CD8-positive, alpha-beta T cell (primary cell): ENCODE measurements at regions of chr12 and their contacts with region 1.

Region 1: DNA sequence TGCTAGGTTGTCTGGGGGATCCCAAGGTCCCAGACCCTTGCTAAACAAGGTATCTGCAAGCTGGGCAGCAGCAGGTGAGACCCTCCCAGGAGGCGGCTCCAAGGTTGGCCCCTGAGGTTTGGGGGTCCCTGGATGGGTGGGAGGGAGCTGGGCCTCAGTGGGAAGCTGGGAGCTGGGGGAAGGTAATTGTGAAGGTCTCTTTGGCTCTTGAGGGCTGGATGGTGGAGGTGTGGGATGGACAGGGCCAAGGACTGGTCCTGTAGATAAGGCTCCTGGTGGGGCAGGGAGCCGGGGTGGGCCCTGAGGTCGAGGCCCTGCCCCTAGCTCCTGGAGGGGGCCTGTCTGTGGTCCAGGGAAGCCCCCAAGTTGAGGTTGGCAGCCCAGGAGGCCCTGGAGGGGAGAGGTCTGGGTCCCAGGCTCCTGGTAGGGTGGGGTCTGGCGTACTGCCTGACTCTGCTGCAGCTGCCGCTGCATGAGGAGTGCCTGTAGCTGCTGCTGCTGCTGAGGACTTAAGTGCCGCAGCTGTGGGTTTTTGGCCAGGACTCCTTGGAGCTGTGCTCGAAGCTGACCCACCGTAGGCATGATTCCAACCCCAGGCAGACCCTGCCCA is 13.1 kb upstream of the PRKAG1 start:
- DNase-seq: no peak
- ATAC-seq: no peak
- H3K4me3 ChIP-seq: no peak overlapping the region
- H3K4me3 Mint-ChIP-seq: no peak overlapping the region
- H3K27ac ChIP-seq: no peak overlapping the region
- H3K27ac Mint-ChIP-seq: no peak overlapping the region
- H3K4me1 ChIP-seq: no peaks in the 10 kb centered on the region
- H3K4me1 Mint-ChIP-seq: no peaks in the 10 kb centered on the region
- H3K27me3 ChIP-seq: no peaks in the 10 kb centered on the region
- H3K27me3 Mint-ChIP-seq: no peaks in the 10 kb centered on the region
- CTCF ChIP-seq: no peak

Region 2: GRCh38 chr12:49043856-49044258 is 12.2 kb after region 1 on chr12:
- CTCF ChIA-PET with region 1: interaction called, 28 read pairs
- POLR2A ChIA-PET with region 1: interaction called, 3 read pairs
- intact Hi-C with region 1: no loop called
- DNase-seq: peak; percentile 67 to 90 (median 84)
- ATAC-seq: peak; percentile 87
- H3K4me3 ChIP-seq: no peak overlapping the region
- H3K4me3 Mint-ChIP-seq: no peak overlapping the region
- H3K27ac ChIP-seq: peak overlapping the region; percentile 29 to 55
- H3K27ac Mint-ChIP-seq: peak overlapping the region; percentile 24
- H3K4me1 ChIP-seq: no peaks in the 10 kb centered on the region
- H3K4me1 Mint-ChIP-seq: peaks cover 10% of the 10 kb centered on the region
- H3K27me3 ChIP-seq: no peaks in the 10 kb centered on the region
- H3K27me3 Mint-ChIP-seq: no peaks in the 10 kb centered on the region
- CTCF ChIP-seq: peak; percentile 77